CD14-positive monocyte (primary cell): ENCODE measurements at regions of chr9 and their contacts with region 1.

Region 1: DNA sequence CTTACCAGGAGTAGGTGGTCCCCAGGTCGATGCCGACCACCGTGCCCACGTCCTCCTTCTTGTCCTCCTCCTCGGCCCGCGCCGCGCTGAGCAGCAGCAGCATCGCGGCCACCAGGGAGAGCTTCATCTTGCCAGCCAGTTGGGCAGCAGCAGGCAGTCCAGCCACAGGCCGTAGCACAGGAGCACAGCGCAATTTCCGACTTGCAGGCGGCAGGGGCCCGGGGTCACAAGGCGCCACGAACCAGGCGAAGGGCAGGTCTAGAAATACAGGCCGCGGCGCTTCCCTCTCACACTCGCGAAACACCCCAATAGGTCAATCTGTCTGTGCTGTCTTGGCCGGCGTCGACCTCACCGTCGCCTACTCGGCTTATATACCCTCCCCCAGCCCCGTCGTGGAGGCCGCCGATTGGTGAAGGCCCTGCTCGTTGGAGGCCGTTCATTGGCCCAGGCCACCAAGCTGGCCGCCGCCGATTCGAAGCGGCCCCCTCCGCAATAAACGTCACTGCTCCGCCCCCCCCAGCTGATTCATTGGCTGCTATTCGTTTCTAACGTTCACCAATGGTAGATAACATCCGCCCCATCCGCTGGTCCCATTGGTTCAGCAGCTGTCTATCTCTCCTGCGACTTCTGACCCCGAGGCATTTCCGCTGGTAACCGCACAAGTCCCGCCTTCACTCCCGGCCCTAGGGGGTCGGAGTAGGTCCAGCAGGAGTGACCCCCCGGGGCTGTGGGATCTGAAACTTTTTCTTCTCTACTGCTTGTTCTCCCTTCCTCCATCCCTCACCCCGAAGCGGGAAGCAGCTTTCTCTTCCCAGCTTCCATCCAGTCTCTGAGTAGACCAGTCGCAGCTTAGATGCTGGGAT is at the start of gene HSPA5:
- DNase-seq: peak; percentile 99 to 100 (median 99)
- H3K4me3 ChIP-seq: peak within 1 kb of the TSS; percentile 71 to 97 (median 94)
- H3K4me3 Mint-ChIP-seq: peak within 1 kb of the TSS; percentile 99
- H3K27ac ChIP-seq: peak within 1 kb of the TSS; percentile 95 to 99
- H3K27ac Mint-ChIP-seq: peak within 1 kb of the TSS; percentile 99 to 100 (median 100)
- H3K4me1 ChIP-seq: peaks cover 40 to 76% of the 10 kb centered on the region in 2 donors
- H3K4me1 Mint-ChIP-seq: peaks cover 56% of the 10 kb centered on the region
- H3K27me3 ChIP-seq: no peaks in the 10 kb centered on the region
- H3K27me3 Mint-ChIP-seq: no peaks in the 10 kb centered on the region
- CTCF ChIP-seq: no peak
- polyA plus RNA-seq, gene HSPA5: 105 to 238 (median 156) TPM

Region 2: DNA sequence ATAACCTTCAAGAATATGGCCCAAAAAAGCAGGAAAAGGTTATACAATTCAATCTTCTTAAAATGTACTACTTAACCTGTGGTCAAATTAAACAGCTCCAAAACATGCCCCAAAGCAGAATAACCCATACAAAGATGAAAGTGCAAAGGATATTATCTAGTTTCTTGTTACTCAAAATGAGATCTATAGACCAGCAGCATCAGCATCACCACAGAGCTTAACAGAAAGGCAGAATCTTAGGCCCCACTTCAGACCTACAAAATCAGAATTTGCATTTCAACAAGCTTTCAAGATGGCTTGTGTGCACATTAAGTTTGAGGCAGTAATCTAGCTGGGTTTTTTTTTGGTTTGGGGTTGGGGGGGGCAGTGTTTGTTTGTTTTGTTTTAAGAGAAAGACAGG is 151.9 kb before region 1 on chr9:
- intact Hi-C with region 1: no loop called
- DNase-seq: no peak
- H3K4me3 ChIP-seq: no peak overlapping the region
- H3K4me3 Mint-ChIP-seq: no peak overlapping the region
- H3K27ac ChIP-seq: no peak overlapping the region
- H3K27ac Mint-ChIP-seq: no peak overlapping the region
- H3K4me1 ChIP-seq: no peaks in the 10 kb centered on the region
- H3K4me1 Mint-ChIP-seq: peaks cover 17% of the 10 kb centered on the region
- H3K27me3 ChIP-seq: no peaks in the 10 kb centered on the region
- H3K27me3 Mint-ChIP-seq: peaks cover 0 to 2% (median 1%) of the 10 kb centered on the region in 3 donors
- CTCF ChIP-seq: no peak

Region 3: GRCh38 chr9:125189361-125190289 is 51.6 kb before region 1 on chr9 and contains the start of gene PPP6C:
- intact Hi-C with region 1: loop called (anchors 2 to 5 kb)
- DNase-seq: peak; percentile 96 to 97 (median 97)
- H3K4me3 ChIP-seq: peak within 1 kb of the TSS; percentile 66 to 97 (median 94)
- H3K4me3 Mint-ChIP-seq: peak within 1 kb of the TSS; percentile 94 to 95
- H3K27ac ChIP-seq: peak within 1 kb of the TSS; percentile 88 to 95
- H3K27ac Mint-ChIP-seq: peak within 1 kb of the TSS; percentile 86 to 95 (median 93)
- H3K4me1 ChIP-seq: peaks cover 23 to 34% of the 10 kb centered on the region in 2 donors
- H3K4me1 Mint-ChIP-seq: peaks cover 29% of the 10 kb centered on the region
- H3K27me3 ChIP-seq: no peaks in the 10 kb centered on the region
- H3K27me3 Mint-ChIP-seq: no peaks in the 10 kb centered on the region
- CTCF ChIP-seq: peak; percentile 63
- polyA plus RNA-seq, gene PPP6C: 20.0 to 48.1 (median 36.9) TPM

Region 4: GRCh38 chr9:125261501-125262293 is 20.5 kb after region 1 on chr9 and contains the start of gene GAPVD1:
- intact Hi-C with region 1: loop called (anchors 2 kb)
- DNase-seq: peak; percentile 91 to 94 (median 93)
- H3K4me3 ChIP-seq: peak within 1 kb of the TSS; percentile 83 to 97 (median 90)
- H3K4me3 Mint-ChIP-seq: peak within 1 kb of the TSS; percentile 97 to 98
- H3K27ac ChIP-seq: peak within 1 kb of the TSS; percentile 95 to 98
- H3K27ac Mint-ChIP-seq: peak within 1 kb of the TSS; percentile 98 to 99 (median 99)
- H3K4me1 ChIP-seq: peaks cover 49 to 53% of the 10 kb centered on the region in 2 donors
- H3K4me1 Mint-ChIP-seq: peaks cover 69% of the 10 kb centered on the region
- H3K27me3 ChIP-seq: no peaks in the 10 kb centered on the region
- H3K27me3 Mint-ChIP-seq: peaks cover 0 to 2% (median 0%) of the 10 kb centered on the region in 3 donors
- CTCF ChIP-seq: peak; percentile 58
- polyA plus RNA-seq, gene GAPVD1: 18.7 to 49.2 (median 30.5) TPM